Activated B cell treated with CpG ODN at 0.5 μM for 24 hours (primary cell): ENCODE measurements at regions of chrX and their contacts with region 1.

Region 1: GRCh38 chrX:135521405-135522189 is 1.1 kb downstream of the INTS6L start:
- DNase-seq: peak; percentile 61
- ATAC-seq: peak; percentile 73
- H3K4me3 Mint-ChIP-seq: peak overlapping the region; percentile 98
- H3K27ac Mint-ChIP-seq: peak overlapping the region; percentile 99
- H3K4me1 Mint-ChIP-seq: peaks cover 30% of the 10 kb centered on the region
- H3K27me3 Mint-ChIP-seq: no peaks in the 10 kb centered on the region
- CTCF ChIP-seq: no peak

Region 2: DNA sequence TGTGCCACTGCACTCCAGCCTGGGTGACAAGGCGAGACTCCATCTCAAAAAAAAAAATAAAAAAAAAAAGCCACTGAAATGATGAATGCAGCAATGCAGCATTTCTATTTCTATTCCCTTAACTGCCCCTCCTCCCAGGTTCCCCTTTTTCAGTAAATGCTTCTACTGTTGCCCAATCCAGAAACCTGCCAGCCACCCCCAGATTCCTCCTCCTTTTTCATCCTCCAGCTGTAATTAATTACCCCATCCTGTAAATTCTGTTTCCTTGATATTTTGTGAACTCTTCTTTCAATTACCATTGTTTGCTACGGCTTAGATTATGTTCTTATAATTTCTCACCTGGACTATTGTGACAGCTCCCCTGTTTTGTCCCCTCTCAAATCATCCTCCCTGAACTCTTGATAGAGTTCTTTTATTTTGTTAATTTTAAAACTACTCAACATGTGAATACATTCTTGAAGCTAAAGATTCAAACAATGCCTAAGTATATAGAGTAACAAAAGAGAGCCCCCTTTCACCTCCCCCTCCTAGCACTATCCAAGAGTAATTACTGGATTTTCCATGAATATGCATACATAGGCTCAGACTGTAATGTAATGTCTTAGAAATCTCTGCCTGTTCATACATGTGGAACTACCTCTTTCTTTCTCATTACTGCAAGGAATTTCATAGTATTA is 1965.7 kb before region 1 on chrX:
- CTCF ChIA-PET with region 1: no interaction called
- POLR2A ChIA-PET with region 1: no interaction called
- intact Hi-C with region 1: no loop called
- DNase-seq: no peak
- ATAC-seq: no peak
- H3K4me3 Mint-ChIP-seq: no peak overlapping the region
- H3K27ac Mint-ChIP-seq: no peak overlapping the region
- H3K4me1 Mint-ChIP-seq: no peaks in the 10 kb centered on the region
- H3K27me3 Mint-ChIP-seq: no peaks in the 10 kb centered on the region
- CTCF ChIP-seq: no peak

Region 3: GRCh38 chrX:134807039-134807731 is 714.4 kb before region 1 on chrX:
- CTCF ChIA-PET with region 1: no interaction called
- POLR2A ChIA-PET with region 1: interaction called, 3 read pairs
- intact Hi-C with region 1: loop called (anchors 1 kb)
- DNase-seq: peak; percentile 63
- ATAC-seq: peak; percentile 91
- H3K4me3 Mint-ChIP-seq: peak overlapping the region; percentile 95
- H3K27ac Mint-ChIP-seq: peak overlapping the region; percentile 95
- H3K4me1 Mint-ChIP-seq: peaks cover 23% of the 10 kb centered on the region
- H3K27me3 Mint-ChIP-seq: no peaks in the 10 kb centered on the region
- CTCF ChIP-seq: no peak

Region 4: DNA sequence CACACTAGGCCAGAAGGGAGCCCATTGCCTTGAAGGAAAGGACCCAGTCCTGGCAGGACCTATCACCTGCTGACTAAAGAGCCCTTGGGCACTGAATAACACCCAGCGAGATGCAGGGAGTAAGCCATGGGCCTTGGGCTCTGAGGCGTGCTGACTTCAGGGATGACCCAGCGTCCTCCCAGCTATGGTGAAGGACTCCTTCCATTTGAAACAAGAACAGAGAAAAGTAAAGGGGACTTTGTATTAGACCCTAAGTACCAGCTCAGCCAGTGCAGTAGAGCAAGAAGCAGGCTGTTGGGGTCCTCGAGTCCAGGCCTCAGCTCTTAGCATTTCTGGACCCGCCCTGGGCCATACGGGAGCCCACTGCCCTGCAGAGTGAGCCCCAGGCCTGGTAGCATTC is 264.7 kb before region 1 on chrX:
- CTCF ChIA-PET with region 1: no interaction called
- POLR2A ChIA-PET with region 1: no interaction called
- intact Hi-C with region 1: no loop called
- DNase-seq: no peak
- ATAC-seq: no peak
- H3K4me3 Mint-ChIP-seq: no peak overlapping the region
- H3K27ac Mint-ChIP-seq: no peak overlapping the region
- H3K4me1 Mint-ChIP-seq: no peaks in the 10 kb centered on the region
- H3K27me3 Mint-ChIP-seq: peaks cover 3% of the 10 kb centered on the region
- CTCF ChIP-seq: no peak

Region 5: GRCh38 chrX:135345107-135345589 is 176.4 kb before region 1 on chrX:
- CTCF ChIA-PET with region 1: no interaction called
- POLR2A ChIA-PET with region 1: no interaction called
- intact Hi-C with region 1: no loop called
- DNase-seq: no peak
- ATAC-seq: no peak
- H3K4me3 Mint-ChIP-seq: peak overlapping the region; percentile 73
- H3K27ac Mint-ChIP-seq: peak overlapping the region; percentile 24
- H3K4me1 Mint-ChIP-seq: peaks cover 40% of the 10 kb centered on the region
- H3K27me3 Mint-ChIP-seq: no peaks in the 10 kb centered on the region
- CTCF ChIP-seq: no peak

Region 6: DNA sequence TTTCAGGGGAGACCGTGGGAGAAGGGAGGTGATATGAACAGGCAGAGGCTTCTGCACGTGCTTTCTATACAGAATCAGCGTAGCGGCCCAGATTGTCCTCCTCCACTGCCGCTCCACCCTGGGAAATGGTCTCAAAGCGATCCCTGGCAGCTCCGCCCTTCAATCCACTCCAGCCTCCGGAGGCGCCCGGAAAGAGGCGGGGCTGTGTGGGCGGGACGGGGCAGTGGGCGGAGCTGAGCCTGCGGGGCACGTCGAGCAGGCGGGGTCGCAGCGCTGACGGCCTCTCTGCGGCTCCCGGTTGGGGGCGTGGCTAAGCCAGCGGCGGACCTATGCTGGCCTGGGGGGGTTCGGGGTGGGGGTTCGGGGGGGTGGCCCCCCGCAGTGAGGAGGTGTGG is 100.1 kb before region 1 on chrX:
- CTCF ChIA-PET with region 1: no interaction called
- POLR2A ChIA-PET with region 1: no interaction called
- intact Hi-C with region 1: loop called (anchors 5 kb)
- DNase-seq: peak; percentile 76
- ATAC-seq: peak; percentile 95
- H3K4me3 Mint-ChIP-seq: peak overlapping the region; percentile 64
- H3K27ac Mint-ChIP-seq: no peak overlapping the region
- H3K4me1 Mint-ChIP-seq: peaks cover 4% of the 10 kb centered on the region
- H3K27me3 Mint-ChIP-seq: peaks cover 5% of the 10 kb centered on the region
- CTCF ChIP-seq: no peak

Region 7: DNA sequence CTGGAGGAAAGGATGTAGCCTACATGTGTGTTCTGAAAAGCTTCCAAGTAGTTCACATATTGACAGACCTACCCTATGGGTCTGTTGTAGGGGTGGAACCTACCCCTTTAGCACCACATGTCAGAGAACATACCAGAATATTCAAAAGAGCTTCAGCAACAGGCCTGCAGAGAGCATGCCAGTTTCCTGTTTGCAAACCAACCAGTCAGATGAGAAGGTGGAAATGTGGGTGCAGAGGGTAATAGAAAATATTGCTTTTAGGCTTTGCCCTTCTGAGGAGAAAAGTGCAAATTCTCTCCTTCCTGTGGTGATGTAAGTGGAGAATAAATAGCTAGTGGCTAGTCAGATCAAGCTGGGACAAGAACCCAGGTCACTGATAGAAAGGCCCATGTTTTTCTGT is 15.3 kb after region 1 on chrX:
- CTCF ChIA-PET with region 1: no interaction called
- POLR2A ChIA-PET with region 1: interaction called, 4 read pairs
- intact Hi-C with region 1: loop called (anchors 2 kb)
- DNase-seq: no peak
- ATAC-seq: peak; percentile 45
- H3K4me3 Mint-ChIP-seq: no peak overlapping the region
- H3K27ac Mint-ChIP-seq: peak overlapping the region; percentile 27
- H3K4me1 Mint-ChIP-seq: peaks cover 59% of the 10 kb centered on the region
- H3K27me3 Mint-ChIP-seq: no peaks in the 10 kb centered on the region
- CTCF ChIP-seq: no peak

Region 8: DNA sequence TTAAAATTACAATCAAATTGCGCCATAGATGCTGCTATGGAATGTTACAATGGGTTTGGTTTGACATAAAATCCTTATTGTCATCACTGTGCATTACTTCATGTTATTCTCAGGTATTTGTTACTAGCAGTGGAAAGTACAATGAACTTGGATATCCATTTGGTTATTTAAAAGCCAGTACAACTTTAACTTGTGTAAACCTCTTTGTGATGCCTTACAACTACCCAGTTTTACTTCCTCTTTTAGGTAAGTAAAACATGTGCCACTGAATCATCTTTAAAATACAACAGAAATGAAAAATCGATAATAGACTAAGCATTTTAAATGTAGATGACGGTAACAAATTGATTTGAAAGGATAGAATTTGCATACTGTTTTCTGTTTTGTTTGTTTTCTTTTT is 34.5 kb after region 1 on chrX:
- CTCF ChIA-PET with region 1: no interaction called
- POLR2A ChIA-PET with region 1: interaction called, 3 read pairs
- intact Hi-C with region 1: loop called (anchors 5 kb)
- DNase-seq: no peak
- ATAC-seq: peak; percentile 56
- H3K4me3 Mint-ChIP-seq: no peak overlapping the region
- H3K27ac Mint-ChIP-seq: no peak overlapping the region
- H3K4me1 Mint-ChIP-seq: peaks cover 11% of the 10 kb centered on the region
- H3K27me3 Mint-ChIP-seq: no peaks in the 10 kb centered on the region
- CTCF ChIP-seq: no peak

Region 9: GRCh38 chrX:136784231-136784630 is 1262.6 kb after region 1 on chrX:
- CTCF ChIA-PET with region 1: no interaction called
- POLR2A ChIA-PET with region 1: no interaction called
- intact Hi-C with region 1: no loop called
- DNase-seq: no peak
- ATAC-seq: no peak
- H3K4me3 Mint-ChIP-seq: no peak overlapping the region
- H3K27ac Mint-ChIP-seq: no peak overlapping the region
- H3K4me1 Mint-ChIP-seq: peaks cover 23% of the 10 kb centered on the region
- H3K27me3 Mint-ChIP-seq: no peaks in the 10 kb centered on the region
- CTCF ChIP-seq: no peak